ENCODE measurements at regions of chr1 and their contacts with region 1.

Region 1: GRCh38 chr1:31663622-31664452 is 19.2 kb upstream of the PEF1 start:
- DNase-seq: peak; percentile 68
- ATAC-seq: peak; percentile 40
- H3K4me3 Mint-ChIP-seq: no peak overlapping the region
- H3K27ac Mint-ChIP-seq: no peak overlapping the region
- H3K4me1 Mint-ChIP-seq: no peaks in the 10 kb centered on the region
- H3K27me3 Mint-ChIP-seq: peaks cover 10% of the 10 kb centered on the region

Region 2: GRCh38 chr1:31605908-31606427 is 57.9 kb before region 1 on chr1:
- CTCF ChIA-PET with region 1: no interaction called
- DNase-seq: peak; percentile 80
- ATAC-seq: peak; percentile 98
- H3K4me3 Mint-ChIP-seq: no peak overlapping the region
- H3K27ac Mint-ChIP-seq: peak overlapping the region; percentile 75
- H3K4me1 Mint-ChIP-seq: peaks cover 21% of the 10 kb centered on the region
- H3K27me3 Mint-ChIP-seq: peaks cover 15% of the 10 kb centered on the region

Region 3: GRCh38 chr1:31694069-31694963 is 30.5 kb after region 1 on chr1:
- CTCF ChIA-PET with region 1: no interaction called
- DNase-seq: no peak
- ATAC-seq: no peak
- H3K4me3 Mint-ChIP-seq: no peak overlapping the region
- H3K27ac Mint-ChIP-seq: no peak overlapping the region
- H3K4me1 Mint-ChIP-seq: peaks cover 4% of the 10 kb centered on the region
- H3K27me3 Mint-ChIP-seq: no peaks in the 10 kb centered on the region

Region 4: DNA sequence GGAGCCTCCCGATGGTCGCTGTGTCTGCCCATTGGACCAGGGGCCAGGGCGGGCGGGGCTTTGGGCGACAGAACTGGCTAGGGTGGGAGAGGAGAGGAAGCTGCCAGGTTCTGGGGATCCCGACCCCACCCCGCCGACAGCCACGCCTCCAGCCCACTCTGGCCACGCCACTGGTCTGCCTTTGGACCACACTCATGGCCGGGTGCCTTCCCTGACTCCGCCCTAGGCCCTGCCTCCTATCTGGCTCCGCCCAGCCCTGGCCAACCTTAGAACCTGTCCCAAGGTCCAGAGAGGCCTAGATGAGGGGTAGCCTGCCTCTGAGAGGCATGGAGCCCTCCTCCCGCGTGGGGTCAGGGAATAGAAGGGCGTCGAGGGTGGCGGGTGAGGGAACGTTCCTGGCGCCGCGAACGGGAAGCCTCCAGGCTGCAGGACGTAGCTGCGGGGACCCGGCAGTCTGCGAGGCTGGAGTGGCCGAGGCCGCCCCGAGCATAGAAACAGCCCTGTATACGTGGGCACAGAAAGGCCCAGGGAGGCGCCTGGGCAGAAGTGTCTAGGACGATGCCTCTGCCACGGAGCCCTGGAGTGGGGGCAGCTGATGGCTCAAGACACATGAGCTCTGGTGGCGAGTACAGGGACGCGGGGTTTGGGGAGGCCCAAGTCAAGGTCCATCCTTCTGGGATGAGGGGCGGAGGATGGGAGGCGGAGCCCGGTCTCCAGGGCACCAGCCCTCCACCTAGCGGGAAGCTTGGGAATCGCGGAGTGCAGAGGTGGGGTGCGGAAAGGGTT is 51.4 kb after region 1 on chr1:
- CTCF ChIA-PET with region 1: interaction called, 11 read pairs
- DNase-seq: peak; percentile 54
- ATAC-seq: peak; percentile 71
- H3K4me3 Mint-ChIP-seq: peak overlapping the region; percentile 48
- H3K27ac Mint-ChIP-seq: no peak overlapping the region
- H3K4me1 Mint-ChIP-seq: peaks cover 11% of the 10 kb centered on the region
- H3K27me3 Mint-ChIP-seq: peaks cover 73% of the 10 kb centered on the region

Region 5: DNA sequence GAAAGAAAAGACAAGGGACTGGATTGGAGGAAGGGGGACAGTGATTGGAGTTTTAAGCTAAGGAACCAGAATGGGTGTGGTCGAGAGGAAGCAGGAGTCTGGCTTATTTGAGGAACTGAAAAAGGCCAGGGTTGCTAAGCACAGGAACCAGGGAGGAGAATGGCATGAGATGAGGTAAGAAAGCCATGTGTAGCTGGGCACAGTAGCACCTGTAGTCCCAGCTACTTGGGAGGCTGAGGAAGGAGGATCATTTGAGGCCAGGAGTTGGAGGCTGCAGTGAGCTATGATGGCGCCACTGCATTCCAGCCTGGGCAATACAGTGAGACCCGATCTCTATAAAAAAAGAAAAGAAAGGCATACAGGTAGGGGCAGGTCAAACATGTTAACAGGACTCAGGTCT is 341.7 kb after region 1 on chr1:
- CTCF ChIA-PET with region 1: no interaction called
- DNase-seq: no peak
- ATAC-seq: no peak
- H3K4me3 Mint-ChIP-seq: no peak overlapping the region
- H3K27ac Mint-ChIP-seq: no peak overlapping the region
- H3K4me1 Mint-ChIP-seq: peaks cover 8% of the 10 kb centered on the region
- H3K27me3 Mint-ChIP-seq: peaks cover 4% of the 10 kb centered on the region